A549 (cell line): ENCODE measurements at regions of chr4 and their contacts with region 1.

Region 1: GRCh38 chr4:74531963-74532794 is 87.2 kb downstream of the AREG start:
- DNase-seq: peak; percentile 35 to 90
- ATAC-seq: peak; percentile 93 to 97
- H3K4me3 ChIP-seq: no peak overlapping the region
- H3K27ac ChIP-seq: peak overlapping the region; percentile 77 to 85
- H3K4me1 ChIP-seq: peaks cover 48% of the 10 kb centered on the region
- CTCF ChIP-seq: peak; percentile 63
- EP300 ChIP-seq: no peak
- POLR2A ChIP-seq: no peak
- RAD21 ChIP-seq: peak; percentile 77 to 79

Region 2: DNA sequence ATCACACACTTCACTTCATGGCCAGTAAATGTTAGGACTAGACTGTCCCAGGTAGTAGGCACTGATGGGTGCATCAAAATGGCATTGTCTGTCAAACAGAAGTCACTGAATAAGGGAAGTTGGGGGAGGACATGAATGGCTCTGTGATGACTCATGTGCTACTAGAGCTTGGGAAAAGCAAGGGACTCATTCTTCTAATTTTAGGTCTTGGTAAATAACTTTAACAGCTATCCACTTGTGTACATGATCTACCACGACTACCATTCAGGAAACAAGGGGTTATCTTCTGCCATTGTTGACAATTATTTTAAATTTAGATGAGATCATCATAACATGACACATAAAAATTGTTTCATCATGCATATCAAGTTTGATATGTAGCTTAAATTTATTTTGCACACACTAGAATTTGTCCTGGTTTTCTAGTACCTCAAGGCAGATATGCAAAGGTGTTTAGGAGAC is 80.9 kb before region 1 on chr4:
- CTCF ChIA-PET with region 1: interaction called, 13 read pairs
- POLR2A ChIA-PET with region 1: no interaction called
- DNase-seq: peak; percentile 30 to 78
- ATAC-seq: peak; percentile 51 to 54; a peak in 5 of 6 replicates
- H3K4me3 ChIP-seq: peak overlapping the region; percentile 86; the same call in 1 of the 3 replicates
- H3K27ac ChIP-seq: peak overlapping the region; percentile 67 to 87; a peak in 3 of 6 replicates
- H3K4me1 ChIP-seq: peaks cover 57% of the 10 kb centered on the region
- CTCF ChIP-seq: no peak
- EP300 ChIP-seq: no peak
- POLR2A ChIP-seq: no peak
- RAD21 ChIP-seq: no peak

Region 3: GRCh38 chr4:74466242-74466641 is 65.9 kb before region 1 on chr4:
- CTCF ChIA-PET with region 1: no interaction called
- POLR2A ChIA-PET with region 1: no interaction called
- DNase-seq: no peak
- ATAC-seq: no peak
- H3K4me3 ChIP-seq: no peak overlapping the region
- H3K27ac ChIP-seq: no peak overlapping the region
- H3K4me1 ChIP-seq: no peaks in the 10 kb centered on the region
- CTCF ChIP-seq: no peak
- EP300 ChIP-seq: no peak
- POLR2A ChIP-seq: no peak
- RAD21 ChIP-seq: no peak

Region 4: DNA sequence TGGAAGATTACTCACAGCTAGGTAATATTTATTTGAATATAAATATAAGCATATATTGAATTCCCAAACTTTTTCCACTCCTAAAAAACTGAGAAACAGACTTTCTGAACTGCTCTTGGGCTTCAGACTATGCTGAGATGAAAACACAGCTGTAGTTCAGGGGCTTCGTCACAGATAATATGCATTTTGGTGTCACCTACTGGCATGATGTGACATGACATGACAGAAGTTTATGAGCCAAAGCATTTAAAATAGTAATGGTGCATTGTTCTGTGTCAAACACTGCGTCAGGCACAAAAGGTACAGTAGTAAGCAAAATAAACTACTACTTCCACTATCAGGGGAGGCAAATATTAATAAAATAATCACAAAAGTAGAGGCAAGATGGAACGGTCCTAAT is 90.9 kb after region 1 on chr4:
- CTCF ChIA-PET with region 1: interaction called, 21 read pairs
- POLR2A ChIA-PET with region 1: no interaction called
- DNase-seq: peak; percentile 33 to 88
- ATAC-seq: peak; percentile 45 to 49; a peak in 3 of 6 replicates
- H3K4me3 ChIP-seq: no peak overlapping the region
- H3K27ac ChIP-seq: peak overlapping the region; percentile 89 to 96
- H3K4me1 ChIP-seq: peaks cover 94% of the 10 kb centered on the region
- CTCF ChIP-seq: peak; percentile 72
- EP300 ChIP-seq: no peak
- POLR2A ChIP-seq: no peak
- RAD21 ChIP-seq: peak; percentile 89 to 90

Region 5: DNA sequence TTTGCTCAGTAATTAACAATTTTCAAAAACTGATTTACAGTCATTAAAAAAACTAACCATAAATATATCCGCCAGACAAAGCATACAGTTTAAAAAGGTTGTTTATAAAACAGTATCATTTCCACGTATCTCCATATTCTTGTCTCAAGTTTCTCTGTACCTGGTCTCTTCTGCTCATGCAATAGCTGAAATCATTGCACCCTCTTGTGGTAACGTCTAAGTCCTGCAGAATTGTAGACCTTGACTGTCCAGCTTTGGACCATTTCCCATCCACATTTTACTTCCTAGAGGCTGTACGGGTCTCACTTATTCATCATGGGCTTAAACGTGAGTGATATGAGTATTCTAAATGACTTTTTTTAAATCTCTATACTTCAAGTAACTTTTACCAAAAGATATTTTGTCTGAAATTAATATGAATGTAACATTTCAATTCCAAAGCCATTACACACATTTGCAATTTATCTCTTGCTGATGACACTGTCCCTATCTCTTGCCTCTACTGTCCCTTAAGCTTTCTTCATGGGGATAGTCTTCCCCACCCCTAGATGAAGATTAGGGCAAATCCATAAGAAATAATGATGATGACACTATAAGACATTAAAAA is 143.6 kb after region 1 on chr4:
- CTCF ChIA-PET with region 1: interaction called, 26 read pairs
- POLR2A ChIA-PET with region 1: no interaction called
- DNase-seq: peak; percentile 18 to 80
- ATAC-seq: peak; percentile 78 to 90
- H3K4me3 ChIP-seq: no peak overlapping the region
- H3K27ac ChIP-seq: peak overlapping the region; percentile 32 to 71; a peak in 5 of 6 replicates
- H3K4me1 ChIP-seq: peaks cover 8% of the 10 kb centered on the region; the same call in 2 of the 3 replicates
- CTCF ChIP-seq: peak; percentile 82
- EP300 ChIP-seq: no peak
- POLR2A ChIP-seq: no peak
- RAD21 ChIP-seq: peak; percentile 85 to 94

Region 6: GRCh38 chr4:75040702-75041101 is 508.5 kb after region 1 on chr4:
- CTCF ChIA-PET with region 1: no interaction called
- POLR2A ChIA-PET with region 1: no interaction called
- DNase-seq: peak in 1 of 2 experiments; percentile 0
- ATAC-seq: no peak
- H3K4me3 ChIP-seq: no peak overlapping the region
- H3K27ac ChIP-seq: no peak overlapping the region
- H3K4me1 ChIP-seq: no peaks in the 10 kb centered on the region
- CTCF ChIP-seq: no peak
- EP300 ChIP-seq: no peak
- POLR2A ChIP-seq: no peak
- RAD21 ChIP-seq: no peak